ENCODE measurements at regions of chr15 and their contacts with region 1.

Region 1: GRCh38 chr15:36591536-36592411 is 12.3 kb downstream of the CDIN1 start:
- DNase-seq: no peak
- ATAC-seq: peak; percentile 40; the same call in 2 of the 3 replicates
- H3K4me3 ChIP-seq: no peak overlapping the region
- H3K27ac ChIP-seq: no peak overlapping the region
- H3K4me1 ChIP-seq: no peaks in the 10 kb centered on the region
- H3K27me3 ChIP-seq: no peaks in the 10 kb centered on the region
- CTCF ChIP-seq: no peak
- EP300 ChIP-seq: no peak
- POLR2A ChIP-seq: no peak
- RAD21 ChIP-seq: no peak

Region 2: DNA sequence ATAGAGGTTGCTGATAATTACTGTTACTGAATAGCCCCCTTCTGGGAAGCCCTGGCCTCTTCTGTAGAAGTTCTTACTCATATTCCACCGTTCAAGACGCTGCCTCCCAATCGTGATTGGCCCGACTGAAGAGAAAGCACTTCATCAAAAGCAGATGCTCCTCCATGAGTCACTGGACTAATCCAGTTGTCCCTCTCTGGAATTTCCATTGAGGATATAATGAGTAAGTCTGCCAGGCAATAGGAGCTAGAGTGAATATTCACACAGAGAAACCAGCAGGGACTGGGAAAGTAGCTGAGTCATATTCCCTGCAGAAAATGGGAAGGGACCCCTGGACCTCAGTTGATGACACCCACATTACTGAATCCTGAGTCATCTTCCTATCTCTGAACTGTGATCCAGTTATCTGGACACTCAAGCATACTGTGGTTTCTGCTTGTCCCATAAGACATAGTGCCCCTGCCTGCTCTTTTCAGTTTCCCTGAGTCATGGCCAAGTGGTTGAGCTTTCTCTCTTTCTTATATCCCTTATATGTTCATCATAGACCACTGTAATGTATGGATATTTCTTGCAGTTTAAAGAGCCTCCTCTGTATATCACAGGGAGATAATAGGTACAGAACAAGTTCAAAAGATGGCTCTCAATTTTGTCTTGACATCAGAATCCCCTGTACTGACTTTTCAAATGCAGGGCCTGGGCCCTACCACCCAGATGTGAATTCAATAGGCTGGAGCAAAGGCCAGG is 163.5 kb before region 1 on chr15:
- CTCF ChIA-PET with region 1: no interaction called
- POLR2A ChIA-PET with region 1: no interaction called
- RAD21 ChIA-PET with region 1: no interaction called
- SMC1A ChIA-PET with region 1: no interaction called
- in situ Hi-C with region 1: no loop called
- intact Hi-C with region 1: no loop called
- DNase-seq: no peak
- ATAC-seq: no peak
- H3K4me3 ChIP-seq: no peak overlapping the region
- H3K27ac ChIP-seq: no peak overlapping the region
- H3K4me1 ChIP-seq: no peaks in the 10 kb centered on the region
- H3K27me3 ChIP-seq: no peaks in the 10 kb centered on the region
- CTCF ChIP-seq: no peak
- EP300 ChIP-seq: no peak
- POLR2A ChIP-seq: no peak
- RAD21 ChIP-seq: no peak

Region 3: GRCh38 chr15:36579792-36580431 is 11.9 kb before region 1 on chr15:
- CTCF ChIA-PET with region 1: interaction called, 13 read pairs
- POLR2A ChIA-PET with region 1: interaction called, 4 read pairs
- RAD21 ChIA-PET with region 1: interaction called, 7 read pairs
- SMC1A ChIA-PET with region 1: interaction called, 14 read pairs
- in situ Hi-C with region 1: no loop called
- intact Hi-C with region 1: no loop called
- DNase-seq: no peak
- ATAC-seq: peak; percentile 55
- H3K4me3 ChIP-seq: peak overlapping the region; percentile 76
- H3K27ac ChIP-seq: peak overlapping the region; percentile 83
- H3K4me1 ChIP-seq: peaks cover 8% of the 10 kb centered on the region
- H3K27me3 ChIP-seq: no peaks in the 10 kb centered on the region
- CTCF ChIP-seq: no peak
- EP300 ChIP-seq: no peak
- POLR2A ChIP-seq: no peak
- RAD21 ChIP-seq: no peak

Measured in GM12878 (cell line).